Endothelial cell of umbilical vein (primary cell): ENCODE measurements at regions of chr5 and their contacts with region 1.

Region 1: DNA sequence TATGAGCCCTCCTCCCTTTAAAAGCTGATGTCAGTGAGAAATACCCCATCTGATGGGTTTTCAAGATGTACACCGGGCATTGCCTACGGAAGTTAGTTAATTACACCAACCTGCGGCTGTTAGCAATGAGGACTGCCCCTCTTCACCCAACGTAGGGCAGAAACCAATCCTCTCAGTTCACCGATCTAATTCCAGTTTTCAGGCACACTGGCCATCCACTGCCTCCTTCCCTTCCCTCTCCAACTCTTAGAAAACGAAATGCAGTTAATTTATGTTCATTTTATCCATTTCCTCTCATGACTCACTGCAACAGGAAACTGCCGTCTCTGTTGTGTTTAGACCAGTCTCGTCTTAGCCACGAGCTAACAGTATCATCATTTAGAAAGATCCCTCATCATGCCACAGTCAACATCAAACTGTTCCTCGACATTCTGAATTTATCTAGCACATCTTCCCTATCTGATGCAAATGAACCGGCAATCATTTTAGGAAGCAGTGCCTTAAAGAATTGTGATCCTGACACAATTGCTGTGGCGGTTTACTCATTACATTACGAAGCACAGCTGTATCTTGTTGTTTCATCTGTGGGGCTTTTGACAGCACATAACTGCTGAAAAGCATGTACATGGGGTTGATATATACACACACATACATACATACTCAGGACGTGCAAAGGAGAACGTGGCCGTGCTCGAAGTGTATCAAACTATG is 168.6 kb downstream of the EFNA5 start:
- DNase-seq: peak; percentile 93
- H3K4me3 ChIP-seq: peak overlapping the region; percentile 43 to 90 (median 59)
- H3K27ac ChIP-seq: peak overlapping the region; percentile 97
- H3K4me1 ChIP-seq: peaks cover 24% of the 10 kb centered on the region
- H3K27me3 ChIP-seq: no peaks in the 10 kb centered on the region
- CTCF ChIP-seq: no peak
- POLR2A ChIP-seq: peak; percentile 86

Region 2: DNA sequence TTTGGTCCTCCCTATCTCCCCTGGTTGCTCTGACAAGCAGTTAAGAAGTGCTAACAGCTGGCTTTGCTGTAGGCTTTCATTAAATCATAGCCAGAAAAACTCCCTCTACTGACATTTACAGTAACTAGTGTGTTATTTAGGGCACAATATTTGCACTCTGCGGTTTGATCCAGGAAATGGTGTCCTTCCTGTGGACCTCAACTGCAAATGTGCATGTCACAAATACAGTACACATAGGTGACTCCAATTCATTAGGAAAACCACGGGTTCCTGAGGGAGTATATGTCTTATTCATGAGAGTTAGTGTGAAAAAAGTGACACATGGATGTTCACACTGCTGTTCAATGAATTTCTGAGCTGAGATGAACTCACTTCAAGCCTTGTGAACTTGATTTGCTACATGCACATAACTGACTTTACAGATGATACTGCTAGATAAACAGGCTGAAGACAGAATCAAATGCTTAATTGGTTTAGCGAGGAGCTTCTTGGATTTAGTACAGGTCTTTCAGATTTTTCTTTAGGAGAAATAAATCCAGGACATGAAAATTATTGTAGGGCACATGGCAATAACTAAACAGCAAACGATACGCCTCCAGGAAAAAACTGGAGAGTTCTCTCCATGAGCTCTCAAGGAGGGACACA is 112.9 kb before region 1 on chr5:
- CTCF ChIA-PET with region 1: interaction called, 9 read pairs
- POLR2A ChIA-PET with region 1: no interaction called
- dilution Hi-C with region 1: no loop called
- intact Hi-C with region 1: loop called (anchors 1 kb)
- DNase-seq: peak; percentile 92
- H3K4me3 ChIP-seq: no peak overlapping the region
- H3K27ac ChIP-seq: peak overlapping the region; percentile 57
- H3K4me1 ChIP-seq: peaks cover 32% of the 10 kb centered on the region
- H3K27me3 ChIP-seq: no peaks in the 10 kb centered on the region
- CTCF ChIP-seq: no peak
- POLR2A ChIP-seq: no peak

Region 3: DNA sequence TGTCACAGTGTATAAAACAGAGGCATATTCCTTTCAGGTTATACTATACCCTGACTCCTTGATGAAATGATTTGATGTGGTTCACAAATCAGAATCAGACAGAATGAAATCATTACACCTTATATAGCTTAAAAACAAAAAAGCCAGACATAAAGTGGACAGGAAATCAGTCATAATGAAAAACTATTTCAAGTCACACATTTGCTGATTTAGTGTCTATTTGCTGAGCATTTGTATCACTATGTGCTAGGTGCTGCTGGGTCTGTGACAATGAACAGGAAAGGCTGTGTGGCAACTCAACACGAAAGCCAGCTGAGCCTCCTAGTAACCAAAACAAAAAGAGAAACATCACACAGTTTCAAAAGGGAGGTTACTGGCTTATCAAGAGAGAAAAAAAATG is 25.3 kb before region 1 on chr5:
- CTCF ChIA-PET with region 1: no interaction called
- POLR2A ChIA-PET with region 1: no interaction called
- dilution Hi-C with region 1: no loop called
- intact Hi-C with region 1: loop called (anchors 1 kb)
- DNase-seq: peak; percentile 94
- H3K4me3 ChIP-seq: no peak overlapping the region
- H3K27ac ChIP-seq: peak overlapping the region; percentile 93
- H3K4me1 ChIP-seq: peaks cover 46% of the 10 kb centered on the region
- H3K27me3 ChIP-seq: no peaks in the 10 kb centered on the region
- CTCF ChIP-seq: no peak
- POLR2A ChIP-seq: no peak

Region 4: GRCh38 chr5:107542428-107542827 is 40.3 kb after region 1 on chr5:
- CTCF ChIA-PET with region 1: interaction called, 3 read pairs
- POLR2A ChIA-PET with region 1: interaction called, 5 read pairs
- dilution Hi-C with region 1: no loop called
- intact Hi-C with region 1: loop called (anchors 1 kb)
- DNase-seq: peak; percentile 98
- H3K4me3 ChIP-seq: peak overlapping the region in 1 of 3 experiments; percentile 55
- H3K27ac ChIP-seq: peak overlapping the region; percentile 96
- H3K4me1 ChIP-seq: peaks cover 29% of the 10 kb centered on the region
- H3K27me3 ChIP-seq: no peaks in the 10 kb centered on the region
- CTCF ChIP-seq: no peak
- POLR2A ChIP-seq: no peak

Region 5: GRCh38 chr5:107668154-107669095 is 166.3 kb after region 1 on chr5:
- CTCF ChIA-PET with region 1: no interaction called
- POLR2A ChIA-PET with region 1: no interaction called
- dilution Hi-C with region 1: no loop called
- intact Hi-C with region 1: loop called (anchors 1 kb)
- DNase-seq: peak; percentile 48
- H3K4me3 ChIP-seq: peak overlapping the region in 2 of 3 experiments; percentile 45 to 78
- H3K27ac ChIP-seq: no peak overlapping the region
- H3K4me1 ChIP-seq: peaks cover 17% of the 10 kb centered on the region
- H3K27me3 ChIP-seq: no peaks in the 10 kb centered on the region
- CTCF ChIP-seq: no peak
- POLR2A ChIP-seq: no peak